ENCODE measurements at regions of chr11 and their contacts with region 1.

Region 1: DNA sequence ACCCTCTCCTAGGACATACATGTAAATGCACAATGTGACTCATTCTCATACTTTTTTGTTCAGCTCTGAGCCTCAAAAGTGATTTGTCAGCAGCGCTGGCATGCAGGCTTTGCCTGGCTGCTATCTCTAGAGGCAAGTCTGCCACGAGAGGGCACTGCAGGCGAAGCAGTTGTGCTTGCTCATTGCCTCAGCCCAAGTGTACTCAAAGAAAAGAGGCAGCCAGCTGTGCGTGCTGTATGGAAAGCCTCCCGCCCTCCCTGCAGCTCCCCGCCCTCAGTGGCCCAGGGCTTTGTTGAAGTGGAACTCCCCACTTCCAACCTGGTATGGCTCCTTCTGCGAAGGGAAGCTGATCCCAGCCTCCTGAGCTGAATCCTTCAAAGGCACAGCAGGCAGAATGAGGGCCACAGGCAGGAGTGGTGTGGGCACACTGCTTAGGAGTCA is 16.3 kb downstream of the SDHAF2 start:
- DNase-seq: peak; percentile 89
- H3K4me3 ChIP-seq: no peak overlapping the region
- H3K27ac ChIP-seq: no peak overlapping the region
- H3K4me1 ChIP-seq: peaks cover 3% of the 10 kb centered on the region
- H3K27me3 ChIP-seq: no peaks in the 10 kb centered on the region
- CTCF ChIP-seq: peak; percentile 95 to 96

Region 2: GRCh38 chr11:61516675-61517572 is 70.7 kb after region 1 on chr11:
- CTCF ChIA-PET with region 1: interaction called, 10 read pairs
- dilution Hi-C with region 1: loop called (anchors 5 kb)
- in situ Hi-C with region 1: no loop called
- intact Hi-C with region 1: loop called (anchors 1 kb)
- DNase-seq: no peak
- H3K4me3 ChIP-seq: no peak overlapping the region
- H3K27ac ChIP-seq: no peak overlapping the region
- H3K4me1 ChIP-seq: no peaks in the 10 kb centered on the region
- H3K27me3 ChIP-seq: no peaks in the 10 kb centered on the region
- CTCF ChIP-seq: peak; percentile 95 to 98

Region 3: GRCh38 chr11:61639816-61640443 is 193.7 kb after region 1 on chr11:
- CTCF ChIA-PET with region 1: interaction called, 23 read pairs
- dilution Hi-C with region 1: no loop called
- in situ Hi-C with region 1: loop called in 1 of 2 experiments (anchors 10 kb)
- intact Hi-C with region 1: loop called (anchors 1 kb)
- DNase-seq: peak; percentile 32
- H3K4me3 ChIP-seq: no peak overlapping the region
- H3K27ac ChIP-seq: no peak overlapping the region
- H3K4me1 ChIP-seq: no peaks in the 10 kb centered on the region
- H3K27me3 ChIP-seq: no peaks in the 10 kb centered on the region
- CTCF ChIP-seq: no peak

Measured in mammary epithelial cell (primary cell).